OCI-LY7 (cell line): ENCODE measurements at regions of chr2 and their contacts with region 1.

Region 1: DNA sequence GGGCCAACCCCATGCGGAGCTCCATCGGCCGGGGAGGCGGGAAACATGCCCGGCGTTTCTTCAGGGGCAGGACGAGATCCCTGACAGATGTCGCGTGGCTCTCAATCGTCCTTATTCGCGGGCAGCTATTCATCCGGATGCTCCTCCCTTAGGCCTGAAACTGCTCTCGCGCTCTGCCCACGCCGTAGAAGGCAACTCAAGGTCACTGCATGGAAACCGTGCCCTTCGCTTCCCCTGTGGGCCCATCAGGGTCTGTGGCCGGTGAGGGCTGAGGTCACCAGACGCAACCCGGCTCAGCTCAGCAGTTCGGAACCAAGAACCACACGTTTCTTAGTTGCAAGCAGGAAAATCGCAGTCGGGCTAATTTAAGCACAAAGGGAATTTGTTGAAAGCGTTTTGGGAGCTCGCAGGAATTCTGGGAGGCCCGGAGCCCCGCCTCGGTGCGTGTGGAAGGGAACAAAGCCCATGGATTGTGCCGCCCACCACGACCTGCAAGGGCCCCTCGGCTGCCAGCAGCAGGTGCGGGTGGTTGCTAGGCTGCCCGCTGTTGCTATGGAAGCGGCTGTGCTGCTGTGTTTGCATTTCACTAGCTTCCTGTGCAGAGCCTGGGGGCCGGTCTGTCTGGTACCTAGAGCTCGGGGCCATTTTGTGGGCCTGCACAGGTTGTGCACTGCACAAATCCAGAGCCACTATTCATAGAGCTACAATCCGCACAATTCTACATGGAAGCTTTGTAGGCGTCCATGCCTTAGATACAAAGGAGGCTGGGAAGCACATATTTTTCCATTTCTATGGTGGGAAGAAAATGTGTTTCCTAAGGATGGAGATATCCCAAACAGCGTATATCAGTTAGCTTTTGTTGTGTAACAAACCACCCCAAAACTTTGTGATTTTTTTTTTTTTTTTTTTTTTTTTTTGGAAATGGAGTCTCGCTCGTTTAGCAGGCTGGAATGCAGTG is 6.0 kb upstream of the ALLC start:
- DNase-seq: peak; percentile 92
- H3K4me3 ChIP-seq: peak overlapping the region; percentile 42
- H3K27ac ChIP-seq: peak overlapping the region; percentile 61
- H3K4me1 ChIP-seq: peaks cover 24% of the 10 kb centered on the region
- CTCF ChIP-seq: no peak

Region 2: GRCh38 chr2:3423492-3424175 is 228.3 kb before region 1 on chr2:
- CTCF ChIA-PET with region 1: interaction called, 8 read pairs
- POLR2A ChIA-PET with region 1: interaction called, 3 read pairs
- intact Hi-C with region 1: loop called (anchors 1 kb)
- DNase-seq: peak; percentile 59
- H3K4me3 ChIP-seq: no peak overlapping the region
- H3K27ac ChIP-seq: no peak overlapping the region
- H3K4me1 ChIP-seq: peaks cover 6% of the 10 kb centered on the region
- CTCF ChIP-seq: peak; percentile 100

Region 3: GRCh38 chr2:3470166-3470651 is 181.8 kb before region 1 on chr2:
- CTCF ChIA-PET with region 1: no interaction called
- POLR2A ChIA-PET with region 1: no interaction called
- intact Hi-C with region 1: no loop called
- DNase-seq: no peak
- H3K4me3 ChIP-seq: no peak overlapping the region
- H3K27ac ChIP-seq: no peak overlapping the region
- H3K4me1 ChIP-seq: no peaks in the 10 kb centered on the region
- CTCF ChIP-seq: no peak

Region 4: GRCh38 chr2:3518496-3519254 is 133.3 kb before region 1 on chr2:
- CTCF ChIA-PET with region 1: interaction called, 3 read pairs
- POLR2A ChIA-PET with region 1: interaction called, 3 read pairs
- intact Hi-C with region 1: loop called (anchors 1 kb)
- DNase-seq: peak; percentile 97
- H3K4me3 ChIP-seq: peak overlapping the region; percentile 81
- H3K27ac ChIP-seq: peak overlapping the region; percentile 60
- H3K4me1 ChIP-seq: peaks cover 26% of the 10 kb centered on the region
- CTCF ChIP-seq: no peak

Region 5: GRCh38 chr2:3558205-3559014 is 93.6 kb before region 1 on chr2 and contains the start of gene RNASEH1:
- CTCF ChIA-PET with region 1: interaction called, 3 read pairs
- POLR2A ChIA-PET with region 1: interaction called, 8 read pairs
- intact Hi-C with region 1: loop called (anchors 1 kb)
- DNase-seq: peak; percentile 98
- H3K4me3 ChIP-seq: peak within 1 kb of the TSS; percentile 80
- H3K27ac ChIP-seq: peak within 1 kb of the TSS; percentile 99
- H3K4me1 ChIP-seq: peaks cover 44% of the 10 kb centered on the region
- CTCF ChIP-seq: no peak
- total RNA-seq, gene RNASEH1: 34.7 and 35.7 TPM in 2 replicates

Region 6: DNA sequence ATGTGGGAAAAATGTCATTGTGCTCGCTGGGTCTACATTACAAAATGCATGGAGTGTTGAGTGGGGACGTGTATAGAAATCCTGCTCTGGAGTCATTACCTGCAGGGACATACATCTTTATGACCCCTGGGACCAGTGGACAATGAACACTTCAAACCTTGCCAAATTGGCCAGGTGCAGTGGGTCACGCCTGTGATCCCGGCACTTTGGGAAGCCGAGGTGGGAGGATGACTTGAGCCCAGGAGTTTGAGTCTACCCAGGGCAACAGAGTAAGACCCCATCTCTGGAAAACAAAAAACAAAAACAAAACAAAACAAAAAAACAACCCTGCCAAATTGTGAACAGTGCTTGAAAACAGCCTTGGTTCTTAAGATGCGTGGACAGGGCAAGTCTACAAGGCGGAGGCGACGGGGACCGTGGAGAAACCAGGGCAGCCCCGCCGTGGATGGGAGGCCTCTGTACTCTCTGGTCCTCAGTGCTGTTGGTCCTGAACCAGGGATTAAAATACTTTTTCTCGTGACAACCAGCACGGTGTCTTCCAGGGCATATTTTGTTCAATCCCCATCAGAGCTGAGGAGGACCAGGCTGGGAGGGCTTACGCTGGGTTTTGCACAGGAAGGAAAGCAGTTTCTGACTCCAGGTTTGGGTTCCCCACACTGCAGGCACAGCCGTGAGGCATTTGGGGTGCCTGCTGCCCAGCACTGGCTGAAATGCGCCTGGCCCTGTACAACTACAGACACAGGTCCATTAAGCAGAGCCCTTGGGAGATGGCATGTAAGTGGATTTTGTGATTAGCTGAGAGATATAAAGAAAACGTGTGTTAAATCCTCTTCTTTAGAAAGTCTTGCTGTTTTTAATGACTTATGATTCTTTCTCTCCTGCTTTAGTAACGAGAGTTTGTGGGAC is 43.3 kb before region 1 on chr2:
- CTCF ChIA-PET with region 1: interaction called, 9 read pairs
- POLR2A ChIA-PET with region 1: interaction called, 15 read pairs
- intact Hi-C with region 1: loop called (anchors 2 kb)
- DNase-seq: peak; percentile 29
- H3K4me3 ChIP-seq: peak overlapping the region; percentile 45
- H3K27ac ChIP-seq: peak overlapping the region; percentile 82
- H3K4me1 ChIP-seq: peaks cover 52% of the 10 kb centered on the region
- CTCF ChIP-seq: no peak